CD14-positive monocyte (primary cell): ENCODE measurements at regions of chr13 and their contacts with region 1.

Region 1: DNA sequence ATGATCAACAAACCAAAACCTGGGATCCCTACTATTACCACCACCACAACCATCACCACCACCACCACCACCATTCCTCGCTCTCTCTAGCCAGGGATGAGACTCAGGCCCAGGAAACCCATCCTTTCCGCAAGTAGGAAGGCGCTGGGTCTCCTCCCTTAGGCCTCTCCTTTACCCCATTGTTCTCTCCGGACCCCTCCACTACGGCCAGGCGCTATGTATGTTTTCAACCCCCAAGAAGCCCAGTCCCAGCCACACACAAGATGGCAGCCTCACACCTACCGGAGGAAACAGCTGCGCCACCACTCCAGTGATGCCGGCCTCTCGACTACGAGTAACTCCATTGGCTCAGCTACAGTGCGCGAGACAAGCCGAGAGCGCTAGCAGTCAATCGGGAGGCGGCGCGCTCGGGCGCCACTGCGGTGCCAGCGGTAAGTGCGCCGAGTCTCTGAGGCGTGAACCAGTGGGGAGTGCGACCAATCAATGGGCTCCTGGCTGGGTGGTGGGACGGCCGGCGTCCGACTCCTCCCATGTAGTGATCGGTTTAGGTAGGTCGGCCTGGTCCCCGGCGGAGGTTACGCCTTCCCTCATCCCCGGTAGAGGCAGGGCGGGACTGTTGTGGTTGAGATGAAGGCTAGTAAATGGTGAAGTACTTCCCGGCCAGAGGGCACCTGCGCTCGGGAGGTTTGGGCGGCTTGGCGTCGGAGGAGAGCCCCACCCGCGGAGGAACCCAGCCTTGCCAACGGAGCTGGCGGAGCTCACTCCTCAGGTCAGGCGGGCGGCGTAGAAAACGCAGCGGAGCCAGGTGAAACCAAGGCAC is at the starts of genes CAB39L and SETDB2:
- DNase-seq: peak; percentile 97 to 99 (median 99)
- H3K4me3 ChIP-seq: peak within 1 kb of the TSS; percentile 74 to 99 (median 83)
- H3K4me3 Mint-ChIP-seq: peak within 1 kb of the TSS; percentile 92 to 97
- H3K27ac ChIP-seq: peak within 1 kb of the TSS; percentile 98 to 100
- H3K27ac Mint-ChIP-seq: peak within 1 kb of the TSS; percentile 97 to 100 (median 98)
- H3K4me1 ChIP-seq: peaks cover 27 to 48% of the 10 kb centered on the region in 2 donors
- H3K4me1 Mint-ChIP-seq: peaks cover 38% of the 10 kb centered on the region
- H3K27me3 ChIP-seq: no peaks in the 10 kb centered on the region
- H3K27me3 Mint-ChIP-seq: peaks cover 0 to 1% (median 0%) of the 10 kb centered on the region in 3 donors
- CTCF ChIP-seq: peak; percentile 29
- polyA plus RNA-seq, gene CAB39L: 1.9 to 5.1 (median 2.7) TPM
- polyA plus RNA-seq, gene SETDB2: 4.8 to 6.8 (median 6.4) TPM

Region 2: DNA sequence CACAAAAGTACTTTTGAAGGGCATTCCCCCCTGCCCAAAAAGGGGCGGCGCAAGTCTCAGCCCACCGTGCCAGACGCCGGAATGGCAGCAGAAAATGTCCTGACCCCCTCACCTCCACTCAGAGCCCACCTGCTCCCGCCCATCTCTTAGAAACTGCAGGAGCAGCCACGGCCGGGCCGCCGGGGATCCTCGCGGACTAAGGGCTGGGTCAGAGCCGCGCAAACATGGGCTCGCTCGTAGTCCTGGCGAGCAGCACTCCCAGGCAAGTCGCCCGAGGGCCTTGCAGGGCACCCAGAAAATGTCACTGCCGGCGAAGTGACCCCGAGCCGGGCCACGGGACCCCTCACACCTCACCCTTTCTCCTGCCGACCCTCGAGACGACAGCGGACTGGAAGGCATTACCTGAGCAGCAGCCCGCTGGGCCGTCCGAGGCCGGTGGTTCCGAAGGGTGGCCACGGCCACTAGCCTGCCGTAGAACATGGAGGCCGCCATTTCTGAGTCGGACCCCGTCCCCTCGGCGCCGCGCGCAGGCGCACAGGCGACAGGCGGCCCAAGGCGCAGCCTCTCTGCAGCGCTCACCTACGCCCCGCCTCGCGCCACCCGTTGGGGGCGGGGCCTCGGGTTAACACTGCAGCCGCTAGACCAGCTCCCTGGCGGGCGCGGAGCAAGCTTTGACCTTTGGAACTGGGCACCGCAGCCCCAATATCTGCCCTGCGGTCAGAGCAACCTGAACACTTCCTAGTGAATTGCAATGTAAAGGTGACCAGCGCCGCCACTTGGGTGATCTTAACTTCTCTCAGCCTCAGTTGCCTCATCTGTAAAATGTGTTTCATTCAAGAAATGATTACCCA is 1442.9 kb before region 1 on chr13 and contains the start of gene SUCLA2:
- intact Hi-C with region 1: loop called in 1 of 2 experiments (anchors 10 kb)
- DNase-seq: peak; percentile 83 to 88 (median 84)
- H3K4me3 ChIP-seq: peak within 1 kb of the TSS; percentile 93 to 100 (median 95)
- H3K4me3 Mint-ChIP-seq: peak within 1 kb of the TSS; percentile 95 to 98
- H3K27ac ChIP-seq: peak within 1 kb of the TSS; percentile 54 to 92
- H3K27ac Mint-ChIP-seq: peak within 1 kb of the TSS; percentile 64 to 93 (median 84)
- H3K4me1 ChIP-seq: peaks cover 25 to 26% of the 10 kb centered on the region in 2 donors
- H3K4me1 Mint-ChIP-seq: peaks cover 40% of the 10 kb centered on the region
- H3K27me3 ChIP-seq: no peaks in the 10 kb centered on the region
- H3K27me3 Mint-ChIP-seq: no peaks in the 10 kb centered on the region
- CTCF ChIP-seq: no peak
- polyA plus RNA-seq, gene SUCLA2: 15.0 to 37.2 (median 34.3) TPM

Region 3: DNA sequence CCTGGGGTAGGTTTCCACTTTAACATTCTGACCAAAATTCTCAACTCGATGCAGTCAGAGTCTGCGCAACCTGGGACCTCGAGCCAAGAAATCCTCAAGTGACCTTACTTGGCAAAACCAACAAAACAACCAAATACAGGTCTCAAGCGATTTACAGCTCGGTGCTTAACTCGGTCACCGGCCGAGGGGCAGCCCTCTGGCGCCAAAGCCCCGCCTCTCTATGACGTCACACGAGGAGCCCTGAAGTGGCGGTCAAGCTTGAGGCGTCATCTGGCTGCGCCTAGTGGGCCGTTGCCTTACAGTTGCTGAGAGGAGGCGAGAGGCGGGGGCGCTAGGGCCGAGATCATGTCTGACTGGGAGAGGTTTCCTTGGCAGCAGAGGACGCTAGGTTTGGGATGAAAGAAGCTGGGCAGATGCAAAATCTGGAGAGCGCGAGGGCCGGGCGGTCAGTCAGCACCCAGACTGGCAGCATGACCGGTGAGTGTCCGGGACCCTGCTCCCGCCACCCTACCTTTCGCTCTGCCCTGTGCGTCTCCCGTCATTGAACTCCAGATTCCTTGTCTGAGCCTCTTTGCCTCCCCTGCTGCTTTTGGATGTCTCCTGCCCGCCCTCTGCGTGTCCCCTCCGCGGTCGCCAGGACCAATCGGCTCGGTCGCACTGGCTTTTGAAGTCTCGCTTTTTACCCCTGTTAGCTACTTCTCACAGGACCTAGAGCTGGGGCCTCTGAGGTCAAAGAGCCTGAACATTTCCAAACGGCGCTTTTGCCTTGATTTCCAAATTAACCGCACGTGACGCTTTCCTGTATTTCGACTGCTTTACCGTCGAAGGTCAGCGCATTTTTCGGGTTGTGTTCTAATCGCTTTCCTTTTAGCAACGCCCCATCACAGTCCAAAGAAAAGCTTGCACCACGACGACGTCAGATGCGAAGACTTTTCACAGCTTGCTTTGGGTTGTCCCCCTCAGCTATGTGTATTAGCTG is 196.0 kb before region 1 on chr13 and contains the start of gene CDADC1:
- intact Hi-C with region 1: loop called in 1 of 2 experiments (anchors 10 kb)
- DNase-seq: peak; percentile 95 to 96 (median 96)
- H3K4me3 ChIP-seq: peak within 1 kb of the TSS; percentile 56 to 91 (median 74)
- H3K4me3 Mint-ChIP-seq: peak within 1 kb of the TSS; percentile 99
- H3K27ac ChIP-seq: peak within 1 kb of the TSS; percentile 86 to 97
- H3K27ac Mint-ChIP-seq: peak within 1 kb of the TSS; percentile 98 to 100 (median 99)
- H3K4me1 ChIP-seq: peaks cover 19 to 23% of the 10 kb centered on the region in 2 donors
- H3K4me1 Mint-ChIP-seq: peaks cover 29% of the 10 kb centered on the region
- H3K27me3 ChIP-seq: no peaks in the 10 kb centered on the region
- H3K27me3 Mint-ChIP-seq: peaks cover 0 to 4% (median 2%) of the 10 kb centered on the region in 3 donors
- CTCF ChIP-seq: no peak
- polyA plus RNA-seq, gene CDADC1: 3.5 to 6.4 (median 5.2) TPM

Region 4: DNA sequence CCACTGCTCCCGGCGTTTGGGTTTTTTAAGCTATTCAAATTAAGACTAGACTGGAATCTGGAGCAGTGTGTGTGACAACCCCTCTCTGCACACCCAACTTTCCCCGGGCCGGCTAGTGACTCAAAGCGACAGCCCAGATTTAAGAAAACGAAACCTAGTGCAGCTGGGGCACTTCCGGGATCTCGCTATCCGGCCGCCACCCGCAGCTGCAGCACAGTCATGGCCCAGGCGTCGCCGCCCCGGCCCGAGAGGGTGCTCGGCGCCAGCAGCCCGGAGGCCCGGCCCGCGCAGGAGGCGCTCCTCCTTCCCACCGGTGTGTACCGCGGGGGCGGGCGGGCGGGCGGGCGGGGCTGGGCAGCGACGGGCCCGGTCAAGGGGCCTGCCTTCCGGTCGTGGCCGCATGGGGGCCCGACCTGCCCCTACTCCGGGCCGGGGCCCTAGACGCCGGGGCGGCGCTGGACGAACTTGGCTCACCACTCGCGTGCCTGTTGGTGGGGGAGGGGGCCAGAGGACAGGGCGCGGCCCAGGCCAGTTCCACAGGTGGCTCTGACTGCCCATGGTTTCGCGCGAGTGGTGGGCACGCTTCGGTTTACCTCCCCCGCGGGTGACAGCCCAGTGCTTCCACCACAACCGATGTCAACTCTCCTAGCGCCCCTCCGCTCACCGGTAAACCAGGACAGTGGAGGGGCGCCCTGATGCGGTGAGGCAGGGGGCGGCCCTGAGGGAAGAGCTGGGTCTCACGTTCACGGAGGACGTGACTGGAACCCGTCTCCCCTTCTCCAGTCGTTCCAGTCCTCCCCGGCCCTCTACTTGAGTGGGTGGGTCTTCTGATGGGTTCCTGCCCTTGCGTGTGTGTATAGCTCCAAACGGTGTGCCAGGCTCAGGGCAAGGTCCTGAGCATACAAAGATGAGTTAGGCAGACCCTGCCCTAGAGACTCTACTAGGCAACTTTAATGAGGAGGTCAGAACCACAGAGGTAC is 52.2 kb after region 1 on chr13 and contains the start of gene PHF11:
- intact Hi-C with region 1: loop called in 1 of 2 experiments (anchors 5 kb)
- DNase-seq: peak; percentile 88 to 93 (median 91)
- H3K4me3 ChIP-seq: peak within 1 kb of the TSS; percentile 79 to 89 (median 85)
- H3K4me3 Mint-ChIP-seq: peak within 1 kb of the TSS; percentile 97 to 99
- H3K27ac ChIP-seq: peak within 1 kb of the TSS; percentile 94
- H3K27ac Mint-ChIP-seq: peak within 1 kb of the TSS; percentile 97 to 99 (median 99)
- H3K4me1 ChIP-seq: peaks cover 17 to 26% of the 10 kb centered on the region in 2 donors
- H3K4me1 Mint-ChIP-seq: peaks cover 26% of the 10 kb centered on the region
- H3K27me3 ChIP-seq: no peaks in the 10 kb centered on the region
- H3K27me3 Mint-ChIP-seq: peaks cover 0 to 3% (median 0%) of the 10 kb centered on the region in 3 donors
- CTCF ChIP-seq: no peak
- polyA plus RNA-seq, gene PHF11: 63.4 to 68.8 (median 68.4) TPM